ENCODE measurements at regions of chr9 and their contacts with region 1.

Region 1: DNA sequence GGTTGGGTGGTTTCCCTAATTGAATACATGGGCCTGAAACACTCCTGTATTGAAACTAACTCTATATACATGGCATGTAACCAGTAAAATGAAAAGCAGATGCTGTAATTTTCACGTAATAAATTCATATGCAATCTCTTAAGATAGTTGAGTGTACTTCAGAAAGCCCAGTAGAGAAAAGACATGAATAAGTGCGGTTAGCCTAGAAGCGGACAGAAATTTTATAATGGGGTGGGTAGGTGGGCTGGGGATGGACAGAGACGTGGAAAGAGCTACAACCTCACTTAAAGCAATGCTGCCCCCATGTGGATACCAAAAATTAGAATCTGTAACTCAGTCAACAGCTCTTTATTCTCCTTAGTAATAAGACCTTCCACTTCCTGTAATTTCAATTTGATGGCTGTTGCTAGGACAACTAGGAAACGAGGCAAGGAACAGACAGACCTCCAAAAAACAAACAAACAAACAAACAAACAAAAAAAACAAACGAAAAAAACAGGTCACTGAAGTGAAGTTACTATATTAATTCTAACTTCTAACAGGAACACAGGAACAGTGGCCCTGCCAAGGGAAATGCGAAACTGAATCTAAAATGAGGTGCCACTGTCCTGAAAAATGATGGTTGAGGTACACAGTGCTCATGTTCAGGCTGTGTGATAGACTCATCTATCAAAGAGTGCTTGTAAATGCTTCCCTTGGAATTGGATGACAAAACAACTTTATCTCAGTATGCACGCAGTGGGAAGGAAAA is 103.4 kb upstream of the GNA14 start:
- DNase-seq: peak; percentile 81
- ATAC-seq: peak; percentile 69
- H3K4me3 ChIP-seq: no peak overlapping the region
- H3K27ac ChIP-seq: no peak overlapping the region
- H3K4me1 ChIP-seq: peaks cover 5% of the 10 kb centered on the region; the same call in 1 of the 2 replicates
- H3K27me3 ChIP-seq: no peaks in the 10 kb centered on the region
- CTCF ChIP-seq: peak; percentile 75
- POLR2A ChIP-seq: no peak
- RAD21 ChIP-seq: peak; percentile 81

Region 2: GRCh38 chr9:77291714-77292113 is 459.8 kb before region 1 on chr9:
- CTCF ChIA-PET with region 1: no interaction called
- POLR2A ChIA-PET with region 1: no interaction called
- dilution Hi-C with region 1: no loop called
- in situ Hi-C with region 1: no loop called
- intact Hi-C with region 1: loop called (anchors 5 kb)
- DNase-seq: peak; percentile 33
- ATAC-seq: peak; percentile 66
- H3K4me3 ChIP-seq: no peak overlapping the region
- H3K27ac ChIP-seq: no peak overlapping the region
- H3K4me1 ChIP-seq: peaks cover 4% of the 10 kb centered on the region
- H3K27me3 ChIP-seq: no peaks in the 10 kb centered on the region
- CTCF ChIP-seq: peak; percentile 52
- POLR2A ChIP-seq: no peak
- RAD21 ChIP-seq: peak; percentile 46

Region 3: GRCh38 chr9:77456829-77457437 is 294.6 kb before region 1 on chr9:
- CTCF ChIA-PET with region 1: interaction called, 23 read pairs
- POLR2A ChIA-PET with region 1: no interaction called
- dilution Hi-C with region 1: no loop called
- in situ Hi-C with region 1: no loop called
- intact Hi-C with region 1: loop called (anchors 1 kb)
- DNase-seq: peak; percentile 91
- ATAC-seq: peak; percentile 94
- H3K4me3 ChIP-seq: no peak overlapping the region
- H3K27ac ChIP-seq: no peak overlapping the region
- H3K4me1 ChIP-seq: no peaks in the 10 kb centered on the region
- H3K27me3 ChIP-seq: no peaks in the 10 kb centered on the region
- CTCF ChIP-seq: peak; percentile 86
- POLR2A ChIP-seq: no peak
- RAD21 ChIP-seq: peak; percentile 54

Region 4: GRCh38 chr9:77663754-77664153 is 87.8 kb before region 1 on chr9:
- CTCF ChIA-PET with region 1: interaction called, 4 read pairs
- POLR2A ChIA-PET with region 1: no interaction called
- dilution Hi-C with region 1: no loop called
- in situ Hi-C with region 1: no loop called
- intact Hi-C with region 1: loop called (anchors 2 kb)
- DNase-seq: peak; percentile 16
- ATAC-seq: peak; percentile 32
- H3K4me3 ChIP-seq: no peak overlapping the region
- H3K27ac ChIP-seq: no peak overlapping the region
- H3K4me1 ChIP-seq: peaks cover 2% of the 10 kb centered on the region; the same call in 1 of the 2 replicates
- H3K27me3 ChIP-seq: peaks cover 9% of the 10 kb centered on the region; the same call in 1 of the 2 replicates
- CTCF ChIP-seq: no peak
- POLR2A ChIP-seq: no peak
- RAD21 ChIP-seq: no peak

Region 5: DNA sequence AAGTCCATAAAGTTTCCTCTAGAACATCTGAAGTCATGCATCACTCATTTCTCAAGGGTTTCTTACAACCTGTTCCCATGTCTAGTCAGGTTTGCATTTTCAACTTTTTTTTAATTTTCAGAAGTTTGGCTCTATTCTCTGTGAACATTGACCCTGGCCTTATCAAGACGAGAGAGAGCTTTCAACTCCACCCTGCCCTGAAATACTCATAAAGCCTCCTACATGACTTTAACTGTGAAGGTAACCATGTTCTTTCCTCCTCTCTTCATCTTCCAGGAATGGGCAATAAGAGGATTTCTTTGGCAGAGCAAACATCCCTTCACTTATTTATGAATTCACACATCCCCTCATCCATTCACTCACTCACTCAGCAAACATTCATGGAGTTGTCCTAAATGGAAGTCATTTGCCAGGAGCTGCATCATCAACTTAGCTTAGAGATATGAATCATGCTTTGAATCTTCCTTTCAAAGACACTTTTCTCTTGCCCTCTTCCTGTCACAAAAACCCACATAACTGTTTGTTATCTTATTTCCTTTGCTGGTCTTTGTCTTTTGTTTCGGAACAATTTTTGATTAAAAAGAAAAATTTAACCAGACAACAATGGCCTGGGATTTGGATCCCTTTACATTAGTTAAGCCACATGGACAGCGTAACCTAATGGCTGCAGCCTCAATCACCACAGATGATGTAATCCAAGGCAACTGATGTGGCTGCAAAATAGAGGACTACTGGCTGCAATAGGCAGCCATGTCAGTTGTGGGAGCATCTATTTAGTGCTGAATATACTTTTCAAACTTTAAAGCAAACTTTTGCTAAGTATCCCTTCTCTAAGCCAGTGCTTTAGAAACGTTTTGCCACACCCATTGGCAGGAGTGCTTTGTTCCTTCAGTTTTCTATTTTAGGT is 323.1 kb after region 1 on chr9:
- CTCF ChIA-PET with region 1: no interaction called
- POLR2A ChIA-PET with region 1: no interaction called
- dilution Hi-C with region 1: no loop called
- in situ Hi-C with region 1: no loop called
- intact Hi-C with region 1: no loop called
- DNase-seq: no peak
- ATAC-seq: no peak
- H3K4me3 ChIP-seq: no peak overlapping the region
- H3K27ac ChIP-seq: no peak overlapping the region
- H3K4me1 ChIP-seq: no peaks in the 10 kb centered on the region
- H3K27me3 ChIP-seq: no peaks in the 10 kb centered on the region
- CTCF ChIP-seq: no peak
- POLR2A ChIP-seq: no peak
- RAD21 ChIP-seq: no peak

Region 6: GRCh38 chr9:78507037-78507436 is 755.5 kb after region 1 on chr9:
- CTCF ChIA-PET with region 1: no interaction called
- POLR2A ChIA-PET with region 1: no interaction called
- dilution Hi-C with region 1: no loop called
- in situ Hi-C with region 1: no loop called
- intact Hi-C with region 1: no loop called
- DNase-seq: no peak
- ATAC-seq: no peak
- H3K4me3 ChIP-seq: no peak overlapping the region
- H3K27ac ChIP-seq: no peak overlapping the region
- H3K4me1 ChIP-seq: no peaks in the 10 kb centered on the region
- H3K27me3 ChIP-seq: peaks cover 12% of the 10 kb centered on the region
- CTCF ChIP-seq: no peak
- POLR2A ChIP-seq: no peak
- RAD21 ChIP-seq: no peak

Measured in IMR-90 (cell line).